ENCODE measurements at regions of chr3 and their contacts with region 1.

Region 1: GRCh38 chr3:184362668-184363540 is 1.4 kb downstream of the POLR2H start:
- DNase-seq: peak; percentile 96
- ATAC-seq: peak; percentile 80

Region 2: DNA sequence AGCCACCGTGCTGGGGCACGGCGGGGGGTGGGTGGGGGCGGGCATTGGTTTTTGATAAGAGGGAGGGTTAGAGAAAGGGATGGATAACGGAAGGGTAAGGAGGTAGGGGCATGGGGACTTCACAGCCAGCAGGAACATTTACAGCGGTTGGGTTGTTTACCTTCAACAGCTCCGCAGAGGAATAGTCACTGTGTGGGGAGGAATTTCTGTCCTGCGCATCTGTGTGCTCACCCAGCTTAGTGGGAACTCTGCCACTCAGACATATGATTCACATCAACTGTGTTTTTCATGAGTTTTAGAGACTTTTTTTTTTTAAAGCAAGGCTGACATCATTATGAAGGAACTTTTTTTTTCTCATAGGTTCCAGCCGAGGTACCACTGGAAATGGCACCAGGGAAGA is 36.5 kb after region 1 on chr3:
- intact Hi-C with region 1: no loop called
- DNase-seq: no peak
- ATAC-seq: peak; percentile 82

Region 3: DNA sequence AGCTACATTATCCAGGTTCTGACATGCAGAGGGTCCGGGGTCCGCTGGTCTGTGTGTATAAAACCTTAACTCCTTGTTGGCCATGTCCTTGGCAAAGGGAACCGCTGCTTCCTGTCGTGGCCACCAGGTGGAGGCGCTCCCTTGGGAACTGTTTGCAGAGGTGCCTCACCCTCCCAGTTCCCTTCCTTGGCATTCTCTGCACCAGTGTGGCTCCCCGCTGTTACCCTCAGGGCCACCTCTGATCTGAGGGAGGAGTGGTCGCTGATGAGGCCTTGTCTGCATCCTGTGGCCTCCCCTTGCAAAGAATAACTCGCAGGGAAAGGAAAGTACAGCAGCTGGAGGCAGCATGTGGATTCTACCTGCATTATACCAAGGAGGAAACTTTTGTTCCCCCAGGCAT is 106.5 kb after region 1 on chr3:
- intact Hi-C with region 1: loop called (anchors 5 kb)
- DNase-seq: no peak
- ATAC-seq: no peak

Region 4: DNA sequence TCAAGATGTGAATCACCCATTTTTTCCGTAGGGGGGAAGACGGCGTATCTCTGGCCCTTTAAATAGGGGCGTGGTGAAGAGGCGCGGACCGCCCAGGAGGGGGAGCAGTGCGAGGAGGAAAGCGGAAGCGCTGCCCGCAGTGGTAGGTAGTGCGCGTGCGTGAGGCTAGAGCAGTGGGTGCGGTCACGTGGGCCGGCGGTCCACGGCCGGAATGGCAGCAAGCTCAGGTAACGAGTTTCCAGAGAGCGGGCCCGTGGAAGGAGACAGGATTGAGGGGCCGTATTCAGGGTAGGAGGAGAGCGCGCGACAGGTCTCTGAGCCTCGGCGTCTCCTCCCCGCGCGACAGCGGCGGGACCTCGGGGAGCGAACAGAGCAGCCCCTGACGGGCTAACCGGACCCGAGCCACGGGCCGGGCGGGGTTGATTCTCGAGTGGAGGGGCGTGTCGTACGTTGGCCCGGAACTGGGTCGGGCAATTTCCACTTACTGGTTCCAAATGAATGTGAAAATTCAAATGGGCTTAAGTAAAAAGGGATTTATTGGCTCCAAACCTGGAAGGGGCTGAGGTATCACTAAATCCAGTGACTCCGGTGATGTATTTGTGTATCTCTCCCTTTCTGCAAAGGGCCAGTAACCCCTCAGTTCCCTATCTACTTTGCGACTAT is 449.2 kb after region 1 on chr3 and contains the start of gene VPS8:
- intact Hi-C with region 1: loop called (anchors 10 kb)
- DNase-seq: peak; percentile 98
- ATAC-seq: peak; percentile 97
- total RNA-seq, gene VPS8: 46.1 TPM